Ovary (tissue), 10 donors: ENCODE measurements at regions of chr7 and their contacts with region 1.

Region 1: DNA sequence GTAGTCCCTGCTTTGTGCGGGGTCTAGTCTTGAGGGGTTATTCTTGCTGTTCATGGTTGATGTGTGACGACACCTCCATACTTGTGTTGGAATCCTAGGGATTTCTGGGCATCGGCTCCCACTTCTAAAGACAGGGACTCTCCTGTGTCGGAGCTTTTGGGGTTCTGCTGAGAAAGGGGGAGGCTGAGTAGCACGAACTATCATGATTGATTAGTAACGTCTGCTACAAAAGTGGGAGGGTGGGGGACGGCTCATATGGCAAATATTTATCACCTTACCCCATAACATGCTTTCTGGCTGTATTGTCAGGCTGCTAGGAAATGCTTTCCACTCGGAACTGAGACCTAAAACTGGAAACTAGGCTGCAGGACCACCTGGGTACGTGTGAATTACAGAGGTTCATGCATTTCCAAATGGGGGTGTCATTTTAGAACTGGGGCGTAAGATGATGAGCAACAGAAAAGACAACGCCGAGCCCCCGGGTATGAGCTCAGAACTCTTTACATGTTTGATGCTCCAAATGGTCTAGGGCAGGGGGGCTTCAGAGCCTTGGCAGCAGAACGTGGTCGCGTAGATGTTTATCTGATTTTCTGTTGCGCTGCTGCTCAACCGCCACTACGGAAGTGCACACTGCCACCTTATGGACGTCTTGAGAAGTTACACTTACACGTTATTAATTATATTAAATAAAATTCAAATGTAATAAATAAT is 15.1 kb upstream of the NME8 start:
- DNase-seq: peak; percentile 27 to 48 (median 38)
- H3K4me3 ChIP-seq: peak overlapping the region; percentile 25
- H3K27ac ChIP-seq: no peak overlapping the region
- H3K4me1 ChIP-seq: no peaks in the 10 kb centered on the region
- H3K27me3 ChIP-seq: no peaks in the 10 kb centered on the region
- CTCF ChIP-seq: peak; percentile 37 to 58 (median 55)
- EP300 ChIP-seq: no peak
- POLR2A ChIP-seq: no peak

Region 2: GRCh38 chr7:37211097-37211880 is 622.0 kb before region 1 on chr7:
- intact Hi-C with region 1: loop called in 2 of 4 experiments (anchors 5 to 10 kb)
- DNase-seq: peak in 4 of 5 donors; percentile 44 to 69 (median 58)
- H3K4me3 ChIP-seq: no peak overlapping the region
- H3K27ac ChIP-seq: peak overlapping the region; percentile 13 to 18
- H3K4me1 ChIP-seq: peaks cover 1% of the 10 kb centered on the region
- H3K27me3 ChIP-seq: no peaks in the 10 kb centered on the region
- CTCF ChIP-seq: no peak
- EP300 ChIP-seq: no peak
- POLR2A ChIP-seq: no peak